T-cell (primary cell): ENCODE measurements at regions of chr21 and their contacts with region 1.

Region 1: GRCh38 chr21:33324291-33325221 is at the start of gene IFNAR1:
- DNase-seq: peak; percentile 94 to 100 (median 98)
- ATAC-seq: peak; percentile 88 to 94 (median 91)
- H3K4me3 ChIP-seq: peak within 1 kb of the TSS; percentile 67 to 97
- H3K4me3 Mint-ChIP-seq: no peak within 1 kb of the TSS
- H3K27ac ChIP-seq: peak within 1 kb of the TSS; percentile 92
- H3K27ac Mint-ChIP-seq: no peak within 1 kb of the TSS
- H3K4me1 ChIP-seq: peaks cover 19 to 23% of the 10 kb centered on the region in 2 experiments
- H3K4me1 Mint-ChIP-seq: peaks cover 29 to 32% (median 30%) of the 10 kb centered on the region in 3 donors
- H3K27me3 ChIP-seq: no peaks in the 10 kb centered on the region
- H3K27me3 Mint-ChIP-seq: no peaks in the 10 kb centered on the region
- total RNA-seq, gene IFNAR1: 22.1 to 51.1 (median 45.6) TPM

Region 2: GRCh38 chr21:33115631-33116510 is 208.7 kb before region 1 on chr21:
- CTCF ChIA-PET with region 1: no interaction called
- POLR2A ChIA-PET with region 1: no interaction called
- DNase-seq: peak in 1 of 35 experiments; percentile 9
- ATAC-seq: peak in 1 of 4 experiments; percentile 16
- H3K4me3 ChIP-seq: no peak overlapping the region
- H3K4me3 Mint-ChIP-seq: peak overlapping the region in 1 of 3 donors; percentile 66
- H3K27ac ChIP-seq: no peak overlapping the region
- H3K27ac Mint-ChIP-seq: peak overlapping the region in 1 of 2 donors; percentile 21
- H3K4me1 ChIP-seq: peaks cover 25 to 27% of the 10 kb centered on the region in 2 experiments
- H3K4me1 Mint-ChIP-seq: peaks cover 29 to 32% (median 29%) of the 10 kb centered on the region in 3 donors
- H3K27me3 ChIP-seq: peaks cover 0 to 15% of the 10 kb centered on the region in 2 experiments
- H3K27me3 Mint-ChIP-seq: peaks cover 4 to 19% of the 10 kb centered on the region in 2 donors

Region 3: DNA sequence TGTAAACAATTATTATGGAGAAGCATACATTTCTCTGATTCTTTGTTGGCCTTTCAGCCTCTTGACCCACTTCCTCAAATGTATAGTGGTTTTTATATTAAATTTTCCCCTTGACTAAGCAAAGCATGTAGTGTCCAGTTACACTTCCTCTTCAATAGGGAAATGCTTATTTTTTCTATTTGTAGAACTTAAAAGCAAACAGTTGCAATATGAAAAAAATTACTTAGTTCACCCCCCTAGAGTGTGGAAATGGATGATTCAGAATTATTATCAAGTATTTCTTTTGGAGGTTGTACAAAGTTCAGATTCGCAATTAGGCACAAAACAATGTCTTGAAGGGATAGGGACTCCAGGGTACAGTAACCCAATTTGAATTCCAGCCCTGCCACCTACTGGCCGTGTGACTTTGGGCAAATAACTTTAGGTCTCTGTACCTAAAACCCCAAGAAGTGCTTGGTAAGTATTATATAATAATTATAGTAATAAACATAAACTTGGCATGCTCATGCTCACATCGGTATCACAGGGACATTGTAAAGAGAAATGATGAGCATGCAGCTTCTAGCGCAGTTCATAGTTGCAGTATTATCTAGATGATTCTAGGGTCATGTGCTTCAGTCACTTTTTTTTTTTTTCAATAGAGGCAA is 50.0 kb after region 1 on chr21:
- CTCF ChIA-PET with region 1: no interaction called
- POLR2A ChIA-PET with region 1: no interaction called
- DNase-seq: peak in 29 of 35 experiments; percentile 17 to 74 (median 44)
- ATAC-seq: peak; percentile 75 to 85 (median 80)
- H3K4me3 ChIP-seq: no peak overlapping the region
- H3K4me3 Mint-ChIP-seq: no peak overlapping the region
- H3K27ac ChIP-seq: no peak overlapping the region
- H3K27ac Mint-ChIP-seq: peak overlapping the region in 1 of 2 donors; percentile 43
- H3K4me1 ChIP-seq: peaks cover 2 to 11% of the 10 kb centered on the region in 2 experiments
- H3K4me1 Mint-ChIP-seq: peaks cover 8 to 36% (median 9%) of the 10 kb centered on the region in 3 donors
- H3K27me3 ChIP-seq: peaks cover 0 to 30% of the 10 kb centered on the region in 2 experiments
- H3K27me3 Mint-ChIP-seq: peaks cover 0 to 10% of the 10 kb centered on the region in 2 donors

Region 4: GRCh38 chr21:33386222-33386784 is 61.7 kb after region 1 on chr21:
- CTCF ChIA-PET with region 1: interaction called in 1 of 2 experiments, 11 read pairs
- POLR2A ChIA-PET with region 1: no interaction called
- DNase-seq: no peak
- ATAC-seq: no peak
- H3K4me3 ChIP-seq: no peak overlapping the region
- H3K4me3 Mint-ChIP-seq: no peak overlapping the region
- H3K27ac ChIP-seq: no peak overlapping the region
- H3K27ac Mint-ChIP-seq: no peak overlapping the region
- H3K4me1 ChIP-seq: peaks cover 31 to 42% of the 10 kb centered on the region in 2 experiments
- H3K4me1 Mint-ChIP-seq: peaks cover 43 to 51% (median 46%) of the 10 kb centered on the region in 3 donors
- H3K27me3 ChIP-seq: peaks cover 0 to 51% of the 10 kb centered on the region in 2 experiments
- H3K27me3 Mint-ChIP-seq: peaks cover 0 to 7% of the 10 kb centered on the region in 2 donors

Region 5: DNA sequence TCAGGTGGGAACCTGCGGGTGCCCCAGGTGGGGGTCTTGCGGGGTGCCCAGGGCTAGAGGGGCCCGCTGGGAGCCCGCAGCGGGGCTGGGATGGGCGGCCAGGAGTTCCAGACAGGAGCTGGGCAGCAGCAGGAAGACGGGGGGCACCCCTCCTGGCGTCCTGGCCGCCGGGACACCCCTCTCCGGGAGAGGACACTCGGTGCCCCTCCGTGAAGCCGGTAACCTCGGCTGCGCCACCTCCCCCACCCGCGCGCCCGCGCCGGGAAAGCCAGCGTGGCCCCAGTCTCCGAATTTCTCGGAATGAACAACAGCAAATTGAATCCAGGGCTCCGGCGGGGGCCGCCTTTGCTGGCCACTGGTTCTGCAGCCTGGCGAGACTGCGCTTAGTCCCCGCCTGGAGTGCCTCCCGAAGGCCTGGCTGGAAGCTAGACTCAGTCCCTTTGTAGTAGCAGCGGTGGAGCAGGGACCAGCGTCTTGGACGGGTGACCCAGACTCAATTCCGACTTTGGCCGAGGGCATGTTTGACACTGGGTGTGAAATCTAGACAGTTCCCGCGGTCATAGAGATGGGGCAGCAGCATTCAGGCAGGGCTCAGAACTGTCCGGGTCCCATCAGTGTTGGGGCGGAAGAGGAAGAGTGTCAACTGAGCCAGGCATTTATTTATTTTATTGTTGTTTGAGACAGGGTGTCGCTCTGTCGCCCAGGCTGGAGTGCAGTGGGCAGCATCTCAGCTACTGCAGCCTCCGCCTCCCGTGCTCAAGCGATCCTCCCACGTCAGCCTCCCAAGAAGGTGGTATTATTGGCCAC is 79.4 kb after region 1 on chr21:
- CTCF ChIA-PET with region 1: no interaction called
- POLR2A ChIA-PET with region 1: interaction called in 1 of 2 experiments, 12 read pairs
- DNase-seq: peak in 12 of 35 experiments; percentile 2 to 44 (median 23)
- ATAC-seq: peak; percentile 25 to 45 (median 38)
- H3K4me3 ChIP-seq: peak overlapping the region; percentile 65 to 81
- H3K4me3 Mint-ChIP-seq: peak overlapping the region; percentile 92 to 94 (median 94)
- H3K27ac ChIP-seq: peak overlapping the region; percentile 32
- H3K27ac Mint-ChIP-seq: peak overlapping the region; percentile 94
- H3K4me1 ChIP-seq: peaks cover 13 to 40% of the 10 kb centered on the region in 2 experiments
- H3K4me1 Mint-ChIP-seq: peaks cover 52 to 57% (median 57%) of the 10 kb centered on the region in 3 donors
- H3K27me3 ChIP-seq: peaks cover 0 to 21% of the 10 kb centered on the region in 2 experiments
- H3K27me3 Mint-ChIP-seq: peaks cover 0 to 4% of the 10 kb centered on the region in 2 donors